ENCODE measurements at regions of chr6 and their contacts with region 1.

Region 1: GRCh38 chr6:56314683-56315523 is 67.5 kb upstream of the COL21A1 start:
- DNase-seq: peak; percentile 11
- H3K4me3 Mint-ChIP-seq: no peak overlapping the region
- H3K27ac Mint-ChIP-seq: no peak overlapping the region
- H3K4me1 Mint-ChIP-seq: no peaks in the 10 kb centered on the region
- H3K27me3 Mint-ChIP-seq: no peaks in the 10 kb centered on the region

Region 2: DNA sequence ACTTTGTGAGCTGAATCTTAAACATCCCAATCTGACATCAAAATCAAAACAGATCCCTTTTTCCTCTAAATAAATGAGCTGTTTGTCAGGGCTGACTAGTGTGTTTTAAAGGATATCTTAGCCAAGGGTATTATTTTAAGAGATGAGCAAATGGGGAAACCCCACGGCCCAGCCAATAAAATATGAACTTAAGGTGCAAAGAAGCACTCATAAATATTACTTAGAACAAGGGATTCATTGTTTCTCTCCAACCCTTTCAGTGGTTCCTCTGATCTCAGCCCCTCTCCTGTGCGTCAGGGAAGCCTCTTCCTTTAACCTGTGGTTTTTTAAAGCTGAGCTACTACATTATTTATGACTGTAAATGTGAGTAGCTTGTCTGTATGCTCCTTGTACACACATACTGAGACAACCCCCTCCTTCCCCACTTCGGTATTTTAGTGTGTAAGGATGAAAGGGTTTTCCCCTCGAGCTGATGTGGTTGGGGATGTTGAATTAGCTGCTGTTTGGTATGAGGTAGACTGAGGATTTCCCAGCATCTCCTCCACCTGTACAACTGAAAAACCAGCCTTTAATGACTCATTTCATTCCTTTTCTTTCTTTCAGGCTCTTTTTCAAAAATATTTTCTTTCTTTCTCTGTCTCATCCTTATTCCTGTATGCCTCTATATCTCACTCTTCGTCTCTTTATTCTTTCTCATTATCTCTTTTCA is 446.0 kb before region 1 on chr6:
- CTCF ChIA-PET with region 1: no interaction called
- POLR2A ChIA-PET with region 1: no interaction called
- intact Hi-C with region 1: no loop called
- DNase-seq: peak; percentile 43
- H3K4me3 Mint-ChIP-seq: no peak overlapping the region
- H3K27ac Mint-ChIP-seq: no peak overlapping the region
- H3K4me1 Mint-ChIP-seq: no peaks in the 10 kb centered on the region
- H3K27me3 Mint-ChIP-seq: no peaks in the 10 kb centered on the region

Region 3: GRCh38 chr6:56062836-56063235 is 252.1 kb before region 1 on chr6:
- CTCF ChIA-PET with region 1: no interaction called
- POLR2A ChIA-PET with region 1: no interaction called
- intact Hi-C with region 1: no loop called
- DNase-seq: no peak
- H3K4me3 Mint-ChIP-seq: no peak overlapping the region
- H3K27ac Mint-ChIP-seq: no peak overlapping the region
- H3K4me1 Mint-ChIP-seq: no peaks in the 10 kb centered on the region
- H3K27me3 Mint-ChIP-seq: no peaks in the 10 kb centered on the region

Region 4: GRCh38 chr6:56570413-56571359 is 255.8 kb after region 1 on chr6:
- CTCF ChIA-PET with region 1: interaction called, 3 read pairs
- POLR2A ChIA-PET with region 1: no interaction called
- intact Hi-C with region 1: loop called (anchors 1 kb)
- DNase-seq: no peak
- H3K4me3 Mint-ChIP-seq: no peak overlapping the region
- H3K27ac Mint-ChIP-seq: no peak overlapping the region
- H3K4me1 Mint-ChIP-seq: no peaks in the 10 kb centered on the region
- H3K27me3 Mint-ChIP-seq: peaks cover 4% of the 10 kb centered on the region

Measured in activated CD4-positive, alpha-beta memory T cell treated with anti-CD3 and anti-CD28 coated beads for 36 hours (primary cell).